Naive thymus-derived CD4-positive, alpha-beta T cell (primary cell): ENCODE measurements at regions of chr2 and their contacts with region 1.

Region 1: DNA sequence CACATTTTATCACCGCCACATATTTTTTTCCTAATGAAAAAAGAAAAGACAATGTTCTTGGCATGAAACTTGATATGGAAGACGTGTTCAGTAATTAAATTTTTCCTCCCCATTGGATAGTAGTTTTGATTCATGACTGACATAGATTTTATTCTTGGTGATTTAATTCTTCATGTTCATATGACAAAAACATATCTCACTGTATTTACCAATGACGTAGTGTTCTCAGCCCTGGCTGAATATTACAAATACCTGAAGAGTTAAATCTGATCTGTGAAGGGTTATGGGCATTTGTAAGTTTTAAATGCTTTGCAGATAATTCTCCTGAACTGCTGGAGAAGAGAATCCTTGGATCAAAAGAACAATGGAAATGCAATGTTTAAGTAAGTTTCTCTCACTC is 460.9 kb downstream of the DCDC2C start:
- DNase-seq: no peak
- ATAC-seq: no peak
- H3K4me3 ChIP-seq: no peak overlapping the region
- H3K4me3 Mint-ChIP-seq: no peak overlapping the region
- H3K27ac ChIP-seq: no peak overlapping the region
- H3K27ac Mint-ChIP-seq: no peak overlapping the region
- H3K4me1 ChIP-seq: no peaks in the 10 kb centered on the region
- H3K4me1 Mint-ChIP-seq: no peaks in the 10 kb centered on the region
- H3K27me3 ChIP-seq: no peaks in the 10 kb centered on the region
- H3K27me3 Mint-ChIP-seq: no peaks in the 10 kb centered on the region

Region 2: DNA sequence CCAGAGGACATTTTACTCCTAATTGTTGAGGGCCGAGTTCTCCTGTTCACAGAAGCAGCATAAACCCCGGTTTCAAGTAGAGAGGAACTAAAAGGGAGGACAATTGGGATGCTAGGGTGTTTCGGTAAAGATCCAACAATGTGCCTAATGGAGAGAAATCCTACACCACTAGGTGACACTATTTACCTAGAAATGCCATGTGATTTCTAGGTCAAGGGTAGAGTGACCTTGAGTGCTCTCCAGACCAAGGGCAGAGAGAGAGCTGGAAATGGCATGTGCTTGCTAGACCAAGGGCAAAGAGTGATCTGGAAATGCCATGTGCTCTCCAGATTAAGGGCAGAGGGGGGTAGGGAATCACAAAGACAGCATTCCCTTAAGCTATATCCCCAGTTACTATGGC is 11.1 kb after region 1 on chr2:
- CTCF ChIA-PET with region 1: no interaction called
- POLR2A ChIA-PET with region 1: no interaction called
- intact Hi-C with region 1: loop called in 1 of 2 experiments (anchors 1 kb)
- DNase-seq: no peak
- ATAC-seq: no peak
- H3K4me3 ChIP-seq: no peak overlapping the region
- H3K4me3 Mint-ChIP-seq: no peak overlapping the region
- H3K27ac ChIP-seq: no peak overlapping the region
- H3K27ac Mint-ChIP-seq: no peak overlapping the region
- H3K4me1 ChIP-seq: no peaks in the 10 kb centered on the region
- H3K4me1 Mint-ChIP-seq: no peaks in the 10 kb centered on the region
- H3K27me3 ChIP-seq: no peaks in the 10 kb centered on the region
- H3K27me3 Mint-ChIP-seq: no peaks in the 10 kb centered on the region